CD14-positive monocyte (primary cell): ENCODE measurements at regions of chr7 and their contacts with region 1.

Region 1: DNA sequence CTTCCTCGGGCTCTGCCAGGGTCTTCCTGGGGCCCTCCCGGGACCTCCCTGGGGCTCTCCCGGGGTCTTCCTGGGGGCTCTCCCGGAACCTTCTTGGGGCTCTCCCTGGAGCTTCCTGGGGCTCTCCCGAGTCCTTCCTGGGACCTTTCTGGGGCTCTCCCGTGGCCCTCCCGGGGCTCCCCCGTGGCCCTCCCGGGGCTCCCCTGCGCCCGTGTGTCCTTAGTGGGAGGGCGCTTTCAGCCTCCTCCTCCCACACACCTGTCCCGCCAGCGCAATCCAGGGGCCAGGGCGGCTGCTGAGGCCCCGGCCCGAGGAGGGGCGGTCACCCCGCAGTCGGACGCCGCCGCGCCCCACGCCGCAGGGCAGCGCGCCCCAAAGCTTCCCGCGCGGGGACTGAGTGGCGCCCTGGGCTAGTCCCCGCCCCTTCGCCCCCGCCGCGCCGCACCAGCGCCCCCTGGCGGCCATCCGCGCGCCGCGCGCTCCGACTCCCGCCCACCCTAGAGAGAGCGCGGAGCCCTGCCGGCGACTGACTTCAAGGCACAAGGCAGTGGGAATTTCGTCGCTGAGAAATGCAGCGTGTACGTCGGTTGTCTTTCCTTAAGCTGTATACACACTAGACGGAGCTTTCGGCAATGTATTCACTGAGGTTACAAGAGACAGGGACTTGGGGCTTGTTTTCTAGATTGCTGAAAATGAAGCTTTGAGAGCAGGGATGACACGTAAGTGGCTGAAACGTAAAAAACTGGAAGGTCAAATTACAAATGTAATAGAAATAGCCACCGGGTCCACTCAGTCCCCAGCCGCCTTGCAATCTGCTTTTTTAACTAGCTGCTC is 47.1 kb downstream of the INSIG1 start:
- DNase-seq: peak; percentile 49 to 72 (median 63)
- H3K4me3 ChIP-seq: peak overlapping the region in 1 of 3 experiments; percentile 62
- H3K4me3 Mint-ChIP-seq: peak overlapping the region; percentile 65 to 87
- H3K27ac ChIP-seq: no peak overlapping the region
- H3K27ac Mint-ChIP-seq: peak overlapping the region in 2 of 7 donors; percentile 12 to 47
- H3K4me1 ChIP-seq: peaks cover 9 to 11% of the 10 kb centered on the region in 2 donors
- H3K4me1 Mint-ChIP-seq: peaks cover 4% of the 10 kb centered on the region
- H3K27me3 ChIP-seq: peaks cover 0 to 19% of the 10 kb centered on the region in 2 donors
- H3K27me3 Mint-ChIP-seq: peaks cover under 1 to 19% (median 9%) of the 10 kb centered on the region in 3 donors
- CTCF ChIP-seq: peak; percentile 93

Region 2: DNA sequence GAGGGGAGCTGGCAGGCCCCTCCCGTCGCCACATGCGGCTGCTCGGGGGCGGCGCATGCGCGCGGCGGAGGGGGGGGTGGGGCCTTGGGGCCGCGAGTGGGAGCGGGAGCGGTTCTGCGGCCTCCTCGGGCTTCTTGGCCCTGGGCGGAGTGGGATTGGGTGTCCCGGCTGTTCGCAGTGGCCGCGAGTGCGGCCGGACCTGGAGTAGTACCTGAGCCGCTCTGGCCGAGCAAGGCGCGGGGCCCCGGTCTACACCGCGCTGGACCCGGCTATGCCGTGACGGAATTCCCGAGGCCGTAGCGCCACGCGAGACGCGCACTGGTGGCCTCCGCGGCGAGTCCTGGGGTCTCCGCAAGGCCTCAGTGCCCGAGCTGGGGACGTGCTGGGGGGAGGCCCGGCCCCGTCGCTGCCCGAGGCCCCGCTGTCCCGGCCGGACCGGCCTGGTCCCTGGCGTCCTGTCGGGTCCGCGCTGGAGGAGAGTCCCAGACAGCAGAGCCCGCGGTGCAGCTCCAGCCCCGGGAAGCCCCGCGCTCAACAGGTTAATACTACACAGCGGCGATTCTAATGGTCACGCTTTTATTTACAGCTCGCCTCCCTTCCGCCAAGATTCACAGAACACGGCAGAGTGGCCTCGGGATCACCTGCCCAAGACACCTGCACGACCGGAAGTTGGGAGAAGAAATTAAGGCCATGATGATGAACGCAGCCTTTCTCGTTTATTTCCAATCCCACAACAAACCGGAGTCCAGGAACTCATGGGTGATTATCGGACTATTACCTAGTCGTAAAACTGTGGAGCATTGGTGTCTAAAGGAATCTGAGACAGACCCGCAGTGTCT is 341.2 kb before region 1 on chr7:
- intact Hi-C with region 1: loop called in 1 of 2 experiments (anchors 10 kb)
- DNase-seq: peak; percentile 73 to 79 (median 78)
- H3K4me3 ChIP-seq: peak overlapping the region; percentile 68 to 92 (median 74)
- H3K4me3 Mint-ChIP-seq: peak overlapping the region; percentile 89 to 95
- H3K27ac ChIP-seq: peak overlapping the region in 1 of 2 donors; percentile 83
- H3K27ac Mint-ChIP-seq: peak overlapping the region; percentile 15 to 84 (median 63)
- H3K4me1 ChIP-seq: peaks cover 16 to 18% of the 10 kb centered on the region in 2 donors
- H3K4me1 Mint-ChIP-seq: peaks cover 19% of the 10 kb centered on the region
- H3K27me3 ChIP-seq: no peaks in the 10 kb centered on the region
- H3K27me3 Mint-ChIP-seq: peaks cover 0 to 2% (median 1%) of the 10 kb centered on the region in 3 donors
- CTCF ChIP-seq: no peak

Region 3: GRCh38 chr7:155190688-155191087 is 154.1 kb before region 1 on chr7:
- intact Hi-C with region 1: loop called (anchors 1 to 2 kb)
- DNase-seq: peak; percentile 27 to 55 (median 51)
- H3K4me3 ChIP-seq: no peak overlapping the region
- H3K4me3 Mint-ChIP-seq: peak overlapping the region in 1 of 2 donors; percentile 78
- H3K27ac ChIP-seq: no peak overlapping the region
- H3K27ac Mint-ChIP-seq: no peak overlapping the region
- H3K4me1 ChIP-seq: no peaks in the 10 kb centered on the region
- H3K4me1 Mint-ChIP-seq: peaks cover 9% of the 10 kb centered on the region
- H3K27me3 ChIP-seq: peaks cover 0 to 9% of the 10 kb centered on the region in 2 donors
- H3K27me3 Mint-ChIP-seq: peaks cover 7 to 17% (median 11%) of the 10 kb centered on the region in 3 donors
- CTCF ChIP-seq: peak; percentile 87

Region 4: DNA sequence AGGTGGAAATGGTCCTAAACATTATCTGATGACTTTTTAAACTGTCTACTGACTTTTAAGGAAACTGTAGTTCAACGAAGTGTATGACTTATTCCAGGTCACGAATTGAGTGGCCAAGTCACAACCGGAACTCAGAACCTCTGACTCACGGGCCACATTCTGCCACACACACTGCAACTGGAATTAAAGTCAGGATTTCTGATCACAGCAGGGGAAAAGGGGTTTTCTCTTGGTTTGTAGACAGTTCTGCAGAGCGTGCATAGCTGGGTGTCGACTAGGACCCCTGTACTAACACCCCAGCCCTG is 67.2 kb before region 1 on chr7:
- intact Hi-C with region 1: loop called in 1 of 2 experiments (anchors 10 kb)
- DNase-seq: no peak
- H3K4me3 ChIP-seq: no peak overlapping the region
- H3K4me3 Mint-ChIP-seq: no peak overlapping the region
- H3K27ac ChIP-seq: no peak overlapping the region
- H3K27ac Mint-ChIP-seq: peak overlapping the region in 1 of 7 donors; percentile 39
- H3K4me1 ChIP-seq: peaks cover 17% of the 10 kb centered on the region in 2 donors
- H3K4me1 Mint-ChIP-seq: peaks cover 20% of the 10 kb centered on the region
- H3K27me3 ChIP-seq: no peaks in the 10 kb centered on the region
- H3K27me3 Mint-ChIP-seq: peaks cover 2 to 8% (median 7%) of the 10 kb centered on the region in 3 donors
- CTCF ChIP-seq: no peak